Activated CD4-positive, alpha-beta T cell treated with anti-CD3 and anti-CD28 coated beads, Interleukin-2, amount 10 ng/mL, durations not matched to agents 24 days and 14 days (primary cell): ENCODE measurements at regions of chr1 and their contacts with region 1.

Region 1: DNA sequence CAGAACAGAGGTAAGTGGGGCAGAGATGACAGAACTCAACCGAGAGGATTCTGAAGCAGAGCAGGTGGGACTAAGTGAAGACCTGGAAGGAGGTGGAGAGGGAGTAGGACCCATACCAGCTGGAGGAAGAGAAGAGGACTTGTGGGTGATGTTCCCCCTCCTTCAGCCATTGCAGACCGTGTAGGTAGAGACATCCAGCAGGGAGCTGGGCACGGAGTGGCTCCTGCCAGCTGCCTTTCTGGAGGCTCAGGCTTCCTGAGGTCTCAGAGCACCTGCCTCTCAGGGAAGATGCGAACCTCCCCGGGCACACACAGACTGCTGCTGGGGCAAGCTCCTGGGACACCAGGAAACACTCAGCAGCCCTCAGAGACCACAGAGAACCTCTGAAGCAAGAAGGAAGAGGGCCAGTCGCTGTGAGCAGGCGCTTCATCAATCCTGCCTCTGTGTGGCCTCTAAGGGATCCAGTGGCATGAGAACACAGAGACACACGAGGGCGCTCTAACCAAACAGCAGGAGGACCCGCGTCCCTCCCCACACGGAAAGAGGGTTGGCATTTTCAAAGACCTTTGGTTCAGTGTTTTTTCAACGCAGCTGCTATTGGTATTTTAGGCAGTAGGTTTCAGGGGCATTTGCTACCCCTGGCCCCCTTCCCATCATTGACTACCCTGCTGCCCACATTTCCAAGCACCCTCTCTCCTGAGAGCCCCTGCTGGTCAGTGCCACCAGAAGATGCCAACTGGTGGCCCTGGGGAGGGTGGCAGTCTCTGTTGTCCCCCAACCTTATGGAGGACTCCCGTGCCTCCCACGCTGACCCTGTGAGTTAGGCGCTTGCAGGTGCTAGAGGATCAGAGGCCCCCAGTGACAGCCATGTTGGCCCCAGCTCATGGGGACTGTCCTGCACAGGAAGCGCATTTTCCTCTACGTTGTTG is 89.6 kb upstream of the EDN2 start:
- DNase-seq: peak; percentile 95
- H3K4me3 Mint-ChIP-seq: peak overlapping the region; percentile 2
- H3K27ac Mint-ChIP-seq: peak overlapping the region; percentile 58
- H3K4me1 Mint-ChIP-seq: peaks cover 53% of the 10 kb centered on the region
- H3K27me3 Mint-ChIP-seq: no peaks in the 10 kb centered on the region

Region 2: GRCh38 chr1:41461790-41462611 is 112.0 kb before region 1 on chr1:
- intact Hi-C with region 1: no loop called
- DNase-seq: no peak
- H3K4me3 Mint-ChIP-seq: no peak overlapping the region
- H3K27ac Mint-ChIP-seq: no peak overlapping the region
- H3K4me1 Mint-ChIP-seq: no peaks in the 10 kb centered on the region
- H3K27me3 Mint-ChIP-seq: peaks cover 4% of the 10 kb centered on the region

Region 3: DNA sequence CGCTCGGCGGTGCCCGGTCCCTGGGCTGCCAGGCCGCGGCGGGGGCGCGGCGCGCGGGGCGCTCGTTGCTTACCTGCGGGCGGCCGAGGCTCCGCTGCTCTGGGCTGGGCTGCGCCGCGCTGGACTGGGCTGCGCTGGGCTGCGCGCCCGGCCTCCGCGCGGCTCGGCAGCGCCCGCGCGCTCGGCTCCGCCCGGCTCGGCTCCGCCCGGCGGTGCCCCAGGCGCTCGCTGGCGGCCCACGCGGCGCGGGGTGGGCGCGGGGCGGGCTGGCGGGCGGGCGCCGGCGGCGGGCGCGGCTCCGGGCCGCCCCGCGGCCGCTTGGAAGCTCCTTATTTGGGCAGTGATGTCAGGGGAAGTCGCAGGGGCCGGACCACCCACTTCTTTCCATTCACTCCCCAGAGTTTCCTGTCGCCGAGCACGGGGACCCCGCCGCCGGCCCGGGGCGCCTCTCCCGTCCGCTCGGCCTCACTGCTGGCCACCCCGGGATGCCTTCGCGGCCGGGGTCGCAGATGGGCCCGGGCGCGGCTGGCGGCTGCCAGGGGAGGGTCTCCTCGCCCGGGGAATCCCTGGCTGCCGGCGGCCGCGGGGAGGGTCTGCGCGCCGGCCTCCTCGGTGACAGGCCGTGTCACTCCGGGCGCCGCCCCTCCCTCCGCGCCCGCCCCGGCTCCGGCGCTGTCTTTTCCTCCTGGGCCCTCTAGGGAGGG is 88.2 kb after region 1 on chr1:
- intact Hi-C with region 1: loop called (anchors 2 kb)
- DNase-seq: peak; percentile 93
- H3K4me3 Mint-ChIP-seq: peak overlapping the region; percentile 71
- H3K27ac Mint-ChIP-seq: peak overlapping the region; percentile 74
- H3K4me1 Mint-ChIP-seq: peaks cover 66% of the 10 kb centered on the region
- H3K27me3 Mint-ChIP-seq: no peaks in the 10 kb centered on the region

Region 4: DNA sequence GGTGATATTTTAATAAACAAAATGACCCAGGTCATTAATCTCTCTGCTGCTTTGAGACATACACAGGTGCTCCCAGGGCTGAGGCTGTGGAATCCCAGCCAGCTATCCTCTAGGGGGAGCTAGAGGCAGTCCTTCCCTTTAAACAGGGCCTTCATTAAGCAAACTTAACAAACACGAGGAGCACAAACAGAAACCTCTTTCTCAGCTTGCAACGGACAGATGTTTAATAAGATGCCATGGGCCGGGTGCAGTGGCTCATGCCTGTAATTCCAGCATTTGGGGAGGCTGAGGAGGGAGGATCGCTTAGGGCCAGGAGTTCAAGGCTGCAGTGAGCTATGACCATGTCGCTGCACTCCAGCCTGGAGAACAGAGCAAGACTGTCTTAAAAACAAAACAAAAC is 238.0 kb after region 1 on chr1:
- intact Hi-C with region 1: loop called (anchors 2 kb)
- DNase-seq: peak; percentile 89
- H3K4me3 Mint-ChIP-seq: no peak overlapping the region
- H3K27ac Mint-ChIP-seq: peak overlapping the region; percentile 34
- H3K4me1 Mint-ChIP-seq: peaks cover 54% of the 10 kb centered on the region
- H3K27me3 Mint-ChIP-seq: no peaks in the 10 kb centered on the region

Region 5: DNA sequence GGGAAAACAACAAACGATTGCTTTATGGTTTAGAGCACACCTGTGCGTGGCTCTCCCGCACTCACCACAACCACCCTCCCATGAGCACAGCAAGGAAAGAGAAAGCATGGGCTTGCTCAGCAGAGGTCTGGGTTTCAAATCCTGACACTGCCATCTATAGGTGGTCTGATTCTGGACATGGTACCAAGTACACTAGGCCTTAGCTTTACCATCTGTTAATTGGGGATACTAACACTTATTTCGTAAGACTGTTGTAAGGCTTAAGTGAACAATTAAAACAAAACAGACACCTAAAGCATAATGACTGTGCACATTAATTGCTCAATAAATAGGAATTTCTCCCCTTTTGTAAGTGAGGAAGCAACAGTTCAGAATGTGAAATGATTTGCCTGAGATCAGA is 294.6 kb after region 1 on chr1:
- intact Hi-C with region 1: loop called (anchors 1 kb)
- DNase-seq: peak; percentile 84
- H3K4me3 Mint-ChIP-seq: peak overlapping the region; percentile 35
- H3K27ac Mint-ChIP-seq: peak overlapping the region; percentile 81
- H3K4me1 Mint-ChIP-seq: peaks cover 34% of the 10 kb centered on the region
- H3K27me3 Mint-ChIP-seq: no peaks in the 10 kb centered on the region

Region 6: GRCh38 chr1:41891199-41891896 is 317.3 kb after region 1 on chr1:
- intact Hi-C with region 1: loop called (anchors 10 kb)
- DNase-seq: peak; percentile 91
- H3K4me3 Mint-ChIP-seq: peak overlapping the region; percentile 84
- H3K27ac Mint-ChIP-seq: peak overlapping the region; percentile 94
- H3K4me1 Mint-ChIP-seq: peaks cover 60% of the 10 kb centered on the region
- H3K27me3 Mint-ChIP-seq: no peaks in the 10 kb centered on the region

Region 7: DNA sequence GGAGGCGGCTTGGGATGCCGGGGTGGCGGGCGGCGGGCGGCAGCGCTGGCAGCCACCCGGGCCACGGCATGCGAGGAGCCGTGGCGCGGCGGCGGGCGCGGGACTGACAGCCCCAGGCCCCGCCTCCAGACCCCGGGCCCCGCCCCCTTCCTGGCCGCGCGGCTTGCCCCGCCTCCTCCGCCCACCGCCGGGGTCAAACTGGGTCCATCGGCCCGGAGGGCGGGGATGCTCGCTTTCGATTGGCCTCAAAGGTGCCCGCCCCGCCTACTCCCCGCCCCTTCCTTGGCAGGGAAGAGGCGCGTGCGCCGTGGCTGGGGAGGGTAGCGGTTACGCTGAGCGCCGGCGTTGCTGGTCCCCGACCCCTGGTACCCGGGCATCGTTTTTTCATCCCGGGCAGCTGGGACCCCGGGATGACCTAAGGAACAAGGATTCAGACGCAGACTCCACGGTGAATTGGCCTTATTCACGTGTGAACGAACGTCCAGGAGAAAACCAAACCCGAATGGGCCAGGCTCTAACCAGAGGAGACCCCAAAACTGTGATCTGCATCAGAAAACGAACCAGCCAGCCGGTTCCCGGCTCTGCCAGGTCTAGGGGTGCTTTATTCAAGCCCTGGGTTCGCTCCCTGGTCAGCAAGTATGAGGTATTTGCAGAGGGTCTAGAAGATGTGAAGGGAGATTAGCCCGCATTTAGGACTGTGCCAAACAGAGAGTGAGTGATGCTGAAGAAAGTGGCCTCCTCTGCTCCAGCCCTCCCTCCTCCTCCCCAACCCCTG is 462.0 kb after region 1 on chr1:
- intact Hi-C with region 1: loop called (anchors 5 kb)
- DNase-seq: peak; percentile 99
- H3K4me3 Mint-ChIP-seq: peak overlapping the region; percentile 82
- H3K27ac Mint-ChIP-seq: peak overlapping the region; percentile 31
- H3K4me1 Mint-ChIP-seq: peaks cover 27% of the 10 kb centered on the region
- H3K27me3 Mint-ChIP-seq: peaks cover 10% of the 10 kb centered on the region

Region 8: GRCh38 chr1:42173155-42173933 is 599.3 kb after region 1 on chr1:
- intact Hi-C with region 1: loop called (anchors 5 kb)
- DNase-seq: peak; percentile 89
- H3K4me3 Mint-ChIP-seq: no peak overlapping the region
- H3K27ac Mint-ChIP-seq: no peak overlapping the region
- H3K4me1 Mint-ChIP-seq: no peaks in the 10 kb centered on the region
- H3K27me3 Mint-ChIP-seq: no peaks in the 10 kb centered on the region